ENCODE measurements at regions of chr11 and their contacts with region 1.

Region 1: GRCh38 chr11:46529928-46530574 is 63.8 kb downstream of the AMBRA1 start:
- DNase-seq: no peak
- H3K4me3 ChIP-seq: no peak overlapping the region
- H3K27ac ChIP-seq: no peak overlapping the region
- H3K4me1 ChIP-seq: peaks cover 7 to 36% (median 20%) of the 10 kb centered on the region in 4 donors
- H3K27me3 ChIP-seq: no peaks in the 10 kb centered on the region
- CTCF ChIP-seq: no peak
- EP300 ChIP-seq: no peak
- POLR2A ChIP-seq: no peak

Region 2: DNA sequence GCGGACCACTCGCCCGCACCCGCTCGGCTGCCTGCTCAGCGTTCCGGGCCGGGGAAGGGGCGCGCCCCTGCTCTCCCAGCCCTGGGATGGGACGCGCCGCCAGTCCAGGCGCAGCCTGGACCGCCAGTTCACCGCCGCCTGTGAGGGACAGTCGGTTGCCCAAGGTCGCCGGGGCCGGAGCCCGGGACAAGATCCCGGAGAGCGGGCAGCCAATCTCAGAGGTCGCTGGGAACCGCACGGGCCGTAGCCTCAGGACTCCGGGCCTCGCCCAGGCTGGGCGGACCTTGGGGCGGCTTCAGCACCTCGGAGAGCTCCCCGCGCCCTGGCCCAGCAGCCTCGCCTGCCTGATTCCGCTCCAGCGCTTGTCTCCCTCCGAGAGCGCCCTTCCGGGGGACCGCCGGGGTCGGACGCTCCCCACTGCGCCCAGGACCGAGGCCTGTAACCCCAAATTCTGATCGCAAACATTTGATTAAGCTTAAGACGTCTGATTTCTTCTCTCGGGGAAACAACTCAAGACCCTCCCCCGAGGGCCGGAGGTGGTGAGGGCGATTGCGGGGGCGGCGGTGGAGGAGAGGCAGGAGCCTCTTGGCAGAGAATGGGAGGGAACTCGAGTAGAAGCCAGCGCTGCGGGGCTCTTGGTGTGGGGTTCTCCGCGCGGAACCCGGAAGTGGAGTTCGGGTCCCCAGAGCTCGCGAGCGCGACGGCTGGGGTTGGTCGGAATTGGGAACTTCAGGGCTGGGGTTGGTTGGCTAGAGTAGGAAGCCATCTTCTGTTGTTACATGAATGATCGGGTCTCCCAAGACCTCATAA is 137.4 kb before region 1 on chr11:
- intact Hi-C with region 1: loop called (anchors 5 kb)
- DNase-seq: peak; percentile 87 to 96
- H3K4me3 ChIP-seq: peak overlapping the region; percentile 40 to 63 (median 47)
- H3K27ac ChIP-seq: no peak overlapping the region
- H3K4me1 ChIP-seq: peaks cover 41 to 49% (median 46%) of the 10 kb centered on the region in 4 donors
- H3K27me3 ChIP-seq: peaks cover 17 to 58% (median 49%) of the 10 kb centered on the region in 3 donors
- CTCF ChIP-seq: no peak
- EP300 ChIP-seq: no peak
- POLR2A ChIP-seq: no peak

Measured in stomach (tissue), 19 donors.